ENCODE measurements at regions of chr1 and their contacts with region 1.

Region 1: DNA sequence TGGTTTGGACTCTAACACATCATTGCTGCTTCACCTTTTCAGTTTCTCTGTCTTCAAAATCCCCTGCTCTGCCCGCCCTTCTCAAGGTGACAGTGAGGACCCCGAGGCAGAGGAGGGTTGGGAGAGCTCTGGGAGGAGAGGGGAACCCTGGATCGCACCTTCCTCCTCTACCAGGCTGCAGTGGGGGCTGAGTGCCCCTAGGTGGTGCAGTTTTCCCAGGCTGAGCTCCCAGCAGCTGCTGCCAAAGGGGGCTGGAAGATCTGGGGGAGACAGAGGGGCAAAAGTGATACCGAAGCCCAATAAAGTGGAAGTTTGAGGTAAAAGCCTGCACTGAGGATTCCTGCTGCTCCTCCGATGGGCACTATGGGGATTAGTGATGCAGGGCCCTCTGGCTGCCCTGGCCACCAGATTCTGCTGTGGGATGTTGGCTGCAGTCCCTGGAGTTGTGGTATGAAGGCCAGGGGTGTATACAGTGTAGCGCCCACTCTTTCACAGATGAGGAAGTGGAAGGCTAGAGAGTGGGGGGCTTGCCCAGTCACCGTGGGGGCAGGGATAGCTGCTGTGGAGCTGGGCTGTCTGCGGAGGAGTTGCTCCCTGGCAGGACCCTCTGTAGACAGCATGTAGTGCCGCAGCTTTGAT is 40.7 kb upstream of the SCMH1 start:
- DNase-seq: peak; percentile 34
- H3K4me3 Mint-ChIP-seq: no peak overlapping the region
- H3K27ac Mint-ChIP-seq: no peak overlapping the region
- H3K4me1 Mint-ChIP-seq: no peaks in the 10 kb centered on the region
- H3K27me3 Mint-ChIP-seq: peaks cover 31% of the 10 kb centered on the region

Region 2: GRCh38 chr1:41360993-41361753 is 78.4 kb after region 1 on chr1 and contains the start of gene FOXO6:
- CTCF ChIA-PET with region 1: no interaction called
- POLR2A ChIA-PET with region 1: no interaction called
- DNase-seq: peak; percentile 93
- H3K4me3 Mint-ChIP-seq: peak within 1 kb of the TSS; percentile 62
- H3K27ac Mint-ChIP-seq: no peak within 1 kb of the TSS
- H3K4me1 Mint-ChIP-seq: peaks cover 8% of the 10 kb centered on the region
- H3K27me3 Mint-ChIP-seq: peaks cover 53% of the 10 kb centered on the region
- total RNA-seq, gene FOXO6: 0.20 TPM in 1 of 2 experiments, not detected in the other

Region 3: GRCh38 chr1:41432481-41433280 is 149.9 kb after region 1 on chr1:
- CTCF ChIA-PET with region 1: interaction called, 19 read pairs
- POLR2A ChIA-PET with region 1: no interaction called
- DNase-seq: peak; percentile 79
- H3K4me3 Mint-ChIP-seq: no peak overlapping the region
- H3K27ac Mint-ChIP-seq: no peak overlapping the region
- H3K4me1 Mint-ChIP-seq: no peaks in the 10 kb centered on the region
- H3K27me3 Mint-ChIP-seq: peaks cover 22% of the 10 kb centered on the region